Psoas muscle (tissue), 8 donors: ENCODE measurements at regions of chr16 and their contacts with region 1.

Region 1: GRCh38 chr16:19274165-19274797 is 11.2 kb upstream of the CLEC19A start:
- DNase-seq: no peak
- ATAC-seq: no peak
- H3K4me3 ChIP-seq: no peak overlapping the region
- H3K27ac ChIP-seq: no peak overlapping the region
- H3K4me1 ChIP-seq: no peaks in the 10 kb centered on the region
- H3K27me3 ChIP-seq: peaks cover 0 to 2% (median 0%) of the 10 kb centered on the region in 3 donors
- CTCF ChIP-seq: no peak

Region 2: GRCh38 chr16:19227643-19228042 is 46.6 kb before region 1 on chr16:
- intact Hi-C with region 1: no loop called
- DNase-seq: no peak
- ATAC-seq: no peak
- H3K4me3 ChIP-seq: no peak overlapping the region
- H3K27ac ChIP-seq: no peak overlapping the region
- H3K4me1 ChIP-seq: no peaks in the 10 kb centered on the region
- H3K27me3 ChIP-seq: no peaks in the 10 kb centered on the region
- CTCF ChIP-seq: no peak

Region 3: DNA sequence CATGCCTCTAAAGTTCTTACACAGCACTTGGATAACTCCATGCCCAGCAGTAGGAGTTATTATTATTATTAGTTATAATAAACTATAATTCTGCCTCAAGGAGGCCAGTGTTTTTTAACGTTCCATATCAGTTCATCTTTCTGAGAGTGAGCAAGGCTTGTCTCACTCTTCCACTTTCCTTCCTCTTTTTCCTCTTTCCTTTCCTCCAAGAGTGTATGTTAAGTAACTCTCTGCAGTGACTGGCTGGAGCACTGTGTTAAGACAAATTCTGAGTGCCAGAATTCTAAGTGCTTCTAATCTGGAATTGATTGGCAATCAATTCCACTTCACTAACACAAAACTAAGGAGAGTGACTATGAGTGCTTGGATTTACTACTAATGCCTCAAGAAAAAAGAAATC is 27.6 kb after region 1 on chr16:
- intact Hi-C with region 1: loop called in 1 of 2 experiments (anchors 1 kb)
- DNase-seq: no peak
- ATAC-seq: no peak
- H3K4me3 ChIP-seq: no peak overlapping the region
- H3K27ac ChIP-seq: no peak overlapping the region
- H3K4me1 ChIP-seq: no peaks in the 10 kb centered on the region
- H3K27me3 ChIP-seq: no peaks in the 10 kb centered on the region
- CTCF ChIP-seq: no peak

Region 4: GRCh38 chr16:19329932-19330331 is 55.7 kb after region 1 on chr16:
- intact Hi-C with region 1: no loop called
- DNase-seq: no peak
- ATAC-seq: no peak
- H3K4me3 ChIP-seq: no peak overlapping the region
- H3K27ac ChIP-seq: no peak overlapping the region
- H3K4me1 ChIP-seq: no peaks in the 10 kb centered on the region
- H3K27me3 ChIP-seq: no peaks in the 10 kb centered on the region
- CTCF ChIP-seq: no peak